Colonic mucosa (tissue), 4 donors: ENCODE measurements at regions of chr1 and their contacts with region 1.

Region 1: GRCh38 chr1:201447911-201448871 is 20.8 kb downstream of the PHLDA3 start:
- DNase-seq: peak; percentile 76
- H3K4me3 ChIP-seq: no peak overlapping the region
- H3K27ac ChIP-seq: no peak overlapping the region
- H3K4me1 ChIP-seq: no peaks in the 10 kb centered on the region
- H3K27me3 ChIP-seq: no peaks in the 10 kb centered on the region
- CTCF ChIP-seq: peak; percentile 74

Region 2: DNA sequence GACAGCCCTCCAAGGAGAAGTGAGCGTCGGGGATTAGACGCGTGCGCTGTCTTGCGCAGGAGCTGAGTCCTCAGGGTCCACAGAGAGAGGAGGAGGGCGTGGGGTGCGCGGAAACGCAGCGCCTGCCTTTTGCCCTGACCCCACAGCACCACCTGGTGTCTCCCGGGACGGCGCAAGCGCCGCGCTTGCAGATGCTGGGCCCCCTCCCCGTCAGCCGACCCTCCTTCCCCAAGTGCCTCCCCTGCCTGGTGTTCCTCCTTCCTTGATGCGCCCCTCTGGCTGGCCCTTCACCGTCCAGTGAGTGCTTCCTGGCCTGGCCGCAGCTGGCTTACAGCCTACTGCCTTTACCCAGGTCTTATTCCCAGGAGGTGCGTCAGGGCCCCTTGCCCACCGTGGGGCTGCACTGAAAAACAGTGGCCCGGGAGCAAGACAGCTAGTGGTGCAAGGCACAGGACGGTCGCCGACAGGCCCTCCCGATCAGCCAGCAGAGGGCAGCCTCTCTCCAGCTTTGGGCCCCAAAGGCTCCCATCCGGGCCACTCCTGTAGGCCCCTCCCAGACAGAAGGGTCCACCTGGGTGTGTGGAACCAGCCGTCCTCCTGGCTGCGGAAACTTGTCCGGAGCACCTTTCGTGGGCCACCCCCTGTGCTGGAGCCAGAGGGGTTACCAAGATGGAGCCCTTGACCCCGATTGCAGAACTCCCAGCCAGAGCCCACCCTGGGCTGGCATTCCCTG is 33.7 kb after region 1 on chr1:
- intact Hi-C with region 1: loop called (anchors 2 kb)
- DNase-seq: peak; percentile 90
- H3K4me3 ChIP-seq: peak overlapping the region; percentile 28
- H3K27ac ChIP-seq: peak overlapping the region; percentile 72
- H3K4me1 ChIP-seq: peaks cover 16% of the 10 kb centered on the region
- H3K27me3 ChIP-seq: no peaks in the 10 kb centered on the region
- CTCF ChIP-seq: peak; percentile 95

Region 3: GRCh38 chr1:201511941-201512539 is 63.8 kb after region 1 on chr1:
- intact Hi-C with region 1: loop called (anchors 5 kb)
- DNase-seq: peak; percentile 47
- H3K4me3 ChIP-seq: no peak overlapping the region
- H3K27ac ChIP-seq: peak overlapping the region; percentile 49
- H3K4me1 ChIP-seq: no peaks in the 10 kb centered on the region
- H3K27me3 ChIP-seq: no peaks in the 10 kb centered on the region
- CTCF ChIP-seq: no peak

Region 4: GRCh38 chr1:201673915-201674314 is 225.7 kb after region 1 on chr1:
- intact Hi-C with region 1: no loop called
- DNase-seq: no peak
- H3K4me3 ChIP-seq: no peak overlapping the region
- H3K27ac ChIP-seq: no peak overlapping the region
- H3K4me1 ChIP-seq: peaks cover 4% of the 10 kb centered on the region
- H3K27me3 ChIP-seq: no peaks in the 10 kb centered on the region
- CTCF ChIP-seq: no peak

Region 5: DNA sequence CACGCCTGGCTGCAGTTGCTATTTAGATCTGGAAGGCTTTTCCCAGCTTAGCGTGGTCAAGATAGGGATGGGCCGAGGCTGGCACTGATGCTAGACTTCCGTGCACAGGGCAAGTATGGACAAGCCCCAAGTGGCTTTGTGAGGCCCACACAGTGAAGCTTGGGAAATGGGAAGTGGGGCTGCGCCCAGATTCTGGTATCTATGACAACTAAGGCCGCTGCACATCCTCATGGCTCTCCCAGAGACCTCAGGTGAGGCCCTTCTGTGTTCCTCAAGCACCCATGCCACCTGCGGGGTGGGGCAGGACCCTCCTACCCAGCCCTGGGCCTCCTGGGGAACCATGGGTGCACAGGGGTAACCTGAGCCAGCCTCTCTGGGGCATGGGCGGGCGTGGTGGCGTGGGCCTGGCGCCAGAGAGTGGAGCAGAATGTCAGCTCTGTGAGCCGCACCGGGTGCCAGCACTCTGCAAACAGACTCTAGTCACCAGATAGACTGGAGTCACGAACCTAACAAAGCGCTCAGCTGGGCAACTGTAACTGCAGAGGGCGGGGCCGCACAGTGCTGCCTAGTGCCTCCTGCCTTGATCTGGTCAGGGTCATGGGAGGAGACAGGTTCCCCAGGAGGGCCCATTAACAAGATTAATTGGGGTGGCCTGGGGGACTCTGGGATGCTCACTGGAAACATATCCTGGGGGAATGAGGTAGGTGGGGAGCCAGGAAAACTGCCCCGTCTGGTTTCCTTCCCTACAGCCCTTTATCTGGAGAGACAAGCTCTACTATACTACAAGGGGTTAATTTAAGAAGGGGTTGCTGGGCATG is 608.7 kb after region 1 on chr1:
- intact Hi-C with region 1: no loop called
- DNase-seq: peak; percentile 94
- H3K4me3 ChIP-seq: no peak overlapping the region
- H3K27ac ChIP-seq: peak overlapping the region; percentile 85
- H3K4me1 ChIP-seq: no peaks in the 10 kb centered on the region
- H3K27me3 ChIP-seq: no peaks in the 10 kb centered on the region
- CTCF ChIP-seq: no peak